PC-3 (cell line): ENCODE measurements at regions of chr12 and their contacts with region 1.

Region 1: DNA sequence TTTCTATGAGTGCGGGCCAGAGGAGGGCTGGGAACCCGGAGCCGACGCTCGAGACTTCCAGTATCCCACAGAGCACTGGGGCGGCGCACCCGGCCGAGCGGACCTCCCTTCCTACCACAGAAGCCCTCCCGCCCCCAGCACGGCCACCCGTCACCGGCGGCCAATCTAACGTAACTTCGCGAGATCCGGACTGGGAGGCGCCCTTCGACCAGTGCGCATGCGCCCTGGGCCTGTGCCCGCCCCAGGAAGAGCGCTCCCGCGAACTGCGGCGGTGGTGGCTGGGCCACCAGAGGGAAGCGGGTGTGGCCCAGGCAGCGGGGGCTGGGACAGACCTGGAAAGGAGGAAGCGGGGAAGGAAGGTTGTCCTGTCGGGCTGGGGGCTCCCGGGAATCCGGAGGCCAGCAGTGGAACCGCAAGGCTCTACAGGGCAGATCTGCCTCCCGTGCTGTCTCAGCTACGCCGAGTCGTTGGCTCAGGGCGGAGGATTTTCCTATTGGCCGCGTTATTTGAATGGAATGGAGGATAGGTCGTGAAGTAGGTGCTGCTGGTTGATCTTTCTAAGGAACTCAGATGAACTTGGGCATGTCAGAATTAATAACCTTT is at the start of gene PPP1R12A:
- DNase-seq: peak; percentile 98
- ATAC-seq: peak; percentile 88
- H3K4me3 ChIP-seq: peak within 1 kb of the TSS; percentile 95
- H3K27ac ChIP-seq: peak within 1 kb of the TSS; percentile 73
- H3K4me1 ChIP-seq: peaks cover 19% of the 10 kb centered on the region
- H3K27me3 ChIP-seq: no peaks in the 10 kb centered on the region
- CTCF ChIP-seq: no peak
- total RNA-seq, gene PPP1R12A: 43.2 and 67.5 TPM in 2 replicates

Region 2: GRCh38 chr12:79886917-79887519 is 48.1 kb before region 1 on chr12:
- CTCF ChIA-PET with region 1: no interaction called
- POLR2A ChIA-PET with region 1: no interaction called
- intact Hi-C with region 1: loop called (anchors 2 kb)
- DNase-seq: peak; percentile 84
- ATAC-seq: peak; percentile 78
- H3K4me3 ChIP-seq: no peak overlapping the region
- H3K27ac ChIP-seq: no peak overlapping the region
- H3K4me1 ChIP-seq: peaks cover 12% of the 10 kb centered on the region
- H3K27me3 ChIP-seq: no peaks in the 10 kb centered on the region
- CTCF ChIP-seq: peak; percentile 87

Region 3: GRCh38 chr12:80033448-80033847 is 98.3 kb after region 1 on chr12:
- CTCF ChIA-PET with region 1: no interaction called
- POLR2A ChIA-PET with region 1: no interaction called
- intact Hi-C with region 1: loop called (anchors 2 kb)
- DNase-seq: peak; percentile 89
- ATAC-seq: peak; percentile 95
- H3K4me3 ChIP-seq: no peak overlapping the region
- H3K27ac ChIP-seq: peak overlapping the region; percentile 42
- H3K4me1 ChIP-seq: peaks cover 16% of the 10 kb centered on the region
- H3K27me3 ChIP-seq: no peaks in the 10 kb centered on the region
- CTCF ChIP-seq: no peak

Region 4: DNA sequence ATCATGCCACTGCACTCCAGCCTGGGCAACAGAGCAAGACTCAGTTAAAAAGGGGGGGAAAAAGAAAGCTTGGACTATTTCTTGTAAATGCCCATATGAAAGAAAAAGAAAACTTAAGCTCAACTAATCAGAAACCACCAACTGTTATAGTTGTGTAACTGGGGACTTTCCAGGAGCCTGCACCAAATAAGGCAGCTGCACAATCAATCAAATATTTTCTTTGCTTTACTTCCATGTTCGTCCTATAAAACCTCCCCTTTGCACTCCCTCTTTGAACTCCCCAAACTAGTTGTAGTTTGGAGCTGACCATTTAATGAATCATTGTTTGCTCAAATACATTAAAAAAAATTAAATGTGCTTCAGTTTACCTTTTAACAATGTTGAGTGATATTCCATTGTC is 219.1 kb after region 1 on chr12:
- CTCF ChIA-PET with region 1: no interaction called
- POLR2A ChIA-PET with region 1: no interaction called
- intact Hi-C with region 1: loop called (anchors 10 kb)
- DNase-seq: peak; percentile 92
- ATAC-seq: peak; percentile 96
- H3K4me3 ChIP-seq: no peak overlapping the region
- H3K27ac ChIP-seq: peak overlapping the region; percentile 76
- H3K4me1 ChIP-seq: peaks cover 20% of the 10 kb centered on the region
- H3K27me3 ChIP-seq: no peaks in the 10 kb centered on the region
- CTCF ChIP-seq: no peak